Mucosa of descending colon (tissue), 3 donors: ENCODE measurements at regions of chr13 and their contacts with region 1.

Region 1: GRCh38 chr13:97359181-97360057 is 74.5 kb upstream of the RAP2A start:
- DNase-seq: peak in 1 of 3 donors; percentile 71
- ATAC-seq: peak; percentile 83
- H3K4me3 ChIP-seq: no peak overlapping the region
- H3K4me1 ChIP-seq: no peaks in the 10 kb centered on the region
- CTCF ChIP-seq: peak; percentile 51

Region 2: DNA sequence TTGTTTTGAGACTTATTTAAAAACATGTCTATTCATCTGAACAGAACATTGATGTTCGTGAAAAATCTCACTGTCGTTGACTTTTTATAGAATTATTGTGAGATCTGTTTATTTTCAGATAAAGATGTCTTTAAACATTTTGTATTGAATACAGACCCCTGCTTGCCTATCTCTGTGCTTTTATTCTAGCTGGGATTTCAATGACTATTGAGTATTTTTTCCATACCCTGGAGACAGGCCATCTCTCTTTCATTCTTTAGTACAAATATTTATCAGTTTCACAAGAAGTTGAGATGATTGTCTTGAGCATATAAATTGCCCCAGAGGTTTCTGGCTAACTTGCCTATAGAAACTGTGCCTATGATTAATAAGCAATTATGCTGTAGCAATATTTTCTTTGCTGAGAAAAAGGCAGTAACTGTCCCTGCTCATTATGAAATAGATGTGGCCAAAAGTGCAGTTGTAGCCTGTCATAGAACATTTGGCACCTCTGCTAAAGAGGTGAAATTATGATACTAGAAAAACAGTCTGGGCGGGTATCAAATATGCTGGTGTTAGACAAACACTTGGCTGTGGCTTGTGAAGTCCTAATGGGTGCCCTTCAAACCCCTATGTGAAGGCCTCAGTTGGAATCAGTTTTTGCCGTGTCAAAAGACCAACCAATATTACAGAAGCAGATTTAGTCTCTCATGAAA is 908.9 kb before region 1 on chr13:
- intact Hi-C with region 1: no loop called
- DNase-seq: no peak
- ATAC-seq: no peak
- H3K4me3 ChIP-seq: no peak overlapping the region
- H3K4me1 ChIP-seq: no peaks in the 10 kb centered on the region
- CTCF ChIP-seq: no peak

Region 3: GRCh38 chr13:97026531-97027161 is 332.8 kb before region 1 on chr13:
- intact Hi-C with region 1: loop called in 1 of 2 experiments (anchors 10 kb)
- DNase-seq: no peak
- ATAC-seq: peak; percentile 24
- H3K4me3 ChIP-seq: no peak overlapping the region
- H3K4me1 ChIP-seq: no peaks in the 10 kb centered on the region
- CTCF ChIP-seq: no peak

Region 4: GRCh38 chr13:97109841-97110492 is 249.5 kb before region 1 on chr13:
- intact Hi-C with region 1: loop called in 1 of 2 experiments (anchors 5 kb)
- DNase-seq: peak; percentile 86 to 94 (median 91)
- ATAC-seq: peak; percentile 99
- H3K4me3 ChIP-seq: no peak overlapping the region
- H3K4me1 ChIP-seq: peaks cover 13% of the 10 kb centered on the region
- CTCF ChIP-seq: peak; percentile 89